ENCODE measurements at regions of chr20 and their contacts with region 1.

Region 1: GRCh38 chr20:47886460-47887041 is 101.3 kb upstream of the SULF2 start:
- DNase-seq: no peak
- H3K4me3 ChIP-seq: no peak overlapping the region
- H3K27ac ChIP-seq: no peak overlapping the region
- H3K4me1 ChIP-seq: no peaks in the 10 kb centered on the region
- H3K27me3 ChIP-seq: no peaks in the 10 kb centered on the region
- CTCF ChIP-seq: no peak
- EP300 ChIP-seq: no peak
- POLR2A ChIP-seq: no peak

Region 2: DNA sequence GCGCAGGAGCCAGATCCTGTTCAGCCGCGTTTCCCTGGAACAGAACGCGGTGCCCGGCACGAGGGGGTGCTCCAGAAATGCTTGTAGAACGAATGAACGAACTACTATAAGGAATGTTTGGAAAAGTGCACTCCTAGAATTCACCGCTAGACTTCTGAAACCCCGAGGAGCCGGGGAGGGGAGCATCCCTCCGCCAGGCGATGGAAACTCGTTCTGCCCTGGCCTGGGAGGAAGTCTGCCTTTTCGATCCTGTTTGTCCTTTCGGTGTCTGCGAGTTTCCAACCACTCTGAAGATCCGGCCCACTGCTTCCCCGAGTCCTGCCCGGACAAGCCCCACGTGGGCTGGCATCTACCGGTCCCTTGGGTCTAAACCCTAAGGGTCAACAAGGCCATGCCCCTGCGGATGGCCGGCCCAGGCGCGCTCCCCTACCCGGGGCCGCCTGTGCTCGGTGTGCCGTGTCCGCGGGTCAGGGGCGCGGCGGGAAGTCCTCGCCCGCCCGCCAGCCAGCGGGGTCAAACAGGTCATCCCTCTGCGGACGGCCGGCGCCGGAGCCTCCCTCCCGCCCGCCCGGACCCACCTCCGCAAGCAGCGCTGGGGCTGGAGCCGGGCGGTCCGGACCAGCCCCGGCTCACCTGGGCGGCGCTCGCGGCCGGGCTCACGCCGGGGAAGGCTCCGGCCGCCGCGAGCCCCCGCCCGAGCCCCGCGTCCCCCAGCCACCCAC is 101.8 kb before region 1 on chr20:
- in situ Hi-C with region 1: no loop called
- intact Hi-C with region 1: no loop called
- DNase-seq: peak; percentile 27
- H3K4me3 ChIP-seq: peak overlapping the region; percentile 61 to 75 (median 62)
- H3K27ac ChIP-seq: peak overlapping the region; percentile 67 to 90 (median 88)
- H3K4me1 ChIP-seq: peaks cover 6 to 33% (median 18%) of the 10 kb centered on the region in 4 donors
- H3K27me3 ChIP-seq: no peaks in the 10 kb centered on the region
- CTCF ChIP-seq: peak in 4 of 5 experiments; percentile 20 to 59 (median 38)
- EP300 ChIP-seq: no peak
- POLR2A ChIP-seq: no peak

Region 3: GRCh38 chr20:47821481-47822439 is 64.8 kb before region 1 on chr20:
- in situ Hi-C with region 1: loop called in 1 of 4 experiments (anchors 10 kb)
- intact Hi-C with region 1: no loop called
- DNase-seq: no peak
- H3K4me3 ChIP-seq: no peak overlapping the region
- H3K27ac ChIP-seq: no peak overlapping the region
- H3K4me1 ChIP-seq: no peaks in the 10 kb centered on the region
- H3K27me3 ChIP-seq: peaks cover 28% of the 10 kb centered on the region
- CTCF ChIP-seq: no peak
- EP300 ChIP-seq: no peak
- POLR2A ChIP-seq: no peak

Region 4: DNA sequence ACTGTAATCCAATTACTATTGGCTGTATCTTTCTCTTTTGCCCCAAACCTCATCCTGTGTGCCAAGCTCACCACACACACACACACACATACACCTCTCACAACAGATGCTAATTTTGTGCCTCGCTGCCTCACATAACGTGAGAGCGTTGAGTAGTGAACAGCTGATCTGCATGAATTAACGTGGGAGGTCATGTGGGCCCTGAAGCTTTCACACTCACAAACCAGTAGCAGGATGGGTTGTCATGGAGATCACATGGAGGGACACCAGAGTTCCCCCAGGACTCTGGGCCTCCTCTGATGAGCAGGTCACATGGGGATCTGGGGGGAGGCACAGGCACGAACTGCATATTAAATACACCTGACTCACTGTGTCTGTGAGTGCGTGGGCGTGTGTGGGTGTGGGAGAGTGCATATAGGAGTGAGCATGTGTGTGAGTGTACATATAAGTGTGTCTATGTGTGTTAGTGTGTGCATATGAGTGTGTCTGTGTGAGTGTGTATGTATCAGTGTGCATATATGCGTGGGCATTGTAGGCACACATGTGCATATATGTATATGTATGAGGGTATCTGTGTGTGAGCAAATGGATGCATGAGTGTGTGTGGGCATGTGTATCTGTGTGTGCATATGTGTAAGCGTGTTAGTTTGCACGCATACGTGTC is 38.6 kb before region 1 on chr20:
- in situ Hi-C with region 1: loop called in 1 of 4 experiments (anchors 10 kb)
- intact Hi-C with region 1: no loop called
- DNase-seq: no peak
- H3K4me3 ChIP-seq: no peak overlapping the region
- H3K27ac ChIP-seq: no peak overlapping the region
- H3K4me1 ChIP-seq: no peaks in the 10 kb centered on the region
- H3K27me3 ChIP-seq: peaks cover 4% of the 10 kb centered on the region
- CTCF ChIP-seq: no peak
- EP300 ChIP-seq: no peak
- POLR2A ChIP-seq: no peak

Region 5: GRCh38 chr20:48523212-48523941 is 636.8 kb after region 1 on chr20:
- in situ Hi-C with region 1: loop called (anchors 5 kb)
- intact Hi-C with region 1: no loop called
- DNase-seq: no peak
- H3K4me3 ChIP-seq: no peak overlapping the region
- H3K27ac ChIP-seq: no peak overlapping the region
- H3K4me1 ChIP-seq: no peaks in the 10 kb centered on the region
- H3K27me3 ChIP-seq: no peaks in the 10 kb centered on the region
- CTCF ChIP-seq: no peak
- EP300 ChIP-seq: no peak
- POLR2A ChIP-seq: no peak

Measured in transverse colon (tissue), 4 donors.